Transverse colon (tissue), 4 donors: ENCODE measurements at regions of chr20 and their contacts with region 1.

Region 1: DNA sequence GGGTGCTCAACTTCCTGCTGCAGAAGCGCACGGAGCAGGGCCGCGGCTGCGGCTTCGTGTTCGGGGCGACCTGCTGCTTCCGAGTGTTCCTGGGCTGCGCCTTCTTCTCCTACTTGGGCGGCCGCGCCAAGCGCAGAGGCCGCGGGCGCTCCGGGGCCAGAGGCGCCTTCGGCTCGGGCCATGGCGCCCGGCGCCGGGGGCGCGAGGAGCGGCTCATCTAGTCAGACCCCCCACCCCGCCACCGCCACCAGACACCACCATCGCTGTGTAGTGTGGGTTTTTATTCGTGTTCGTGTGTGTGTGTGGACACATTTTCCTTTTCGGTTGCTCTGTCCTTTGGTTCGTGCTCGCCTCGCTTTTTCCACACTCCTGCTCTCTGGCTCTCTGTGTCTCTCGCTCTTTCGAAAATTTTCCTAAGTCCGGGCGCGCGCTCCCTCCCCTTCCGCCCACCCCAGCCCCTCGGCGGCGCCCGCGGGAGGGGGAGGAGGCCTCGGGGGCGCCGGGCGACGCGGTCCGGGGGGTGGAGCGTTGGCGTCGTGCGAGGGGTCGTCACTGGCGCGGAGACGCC is 38.1 kb downstream of the GNAS start:
- DNase-seq: peak; percentile 75
- H3K4me3 ChIP-seq: peak overlapping the region; percentile 55 to 100 (median 90)
- H3K27ac ChIP-seq: peak overlapping the region; percentile 99 to 100 (median 100)
- H3K4me1 ChIP-seq: peaks cover 15 to 38% (median 25%) of the 10 kb centered on the region in 4 donors
- H3K27me3 ChIP-seq: no peaks in the 10 kb centered on the region
- CTCF ChIP-seq: no peak
- EP300 ChIP-seq: no peak
- POLR2A ChIP-seq: peak; percentile 50

Region 2: DNA sequence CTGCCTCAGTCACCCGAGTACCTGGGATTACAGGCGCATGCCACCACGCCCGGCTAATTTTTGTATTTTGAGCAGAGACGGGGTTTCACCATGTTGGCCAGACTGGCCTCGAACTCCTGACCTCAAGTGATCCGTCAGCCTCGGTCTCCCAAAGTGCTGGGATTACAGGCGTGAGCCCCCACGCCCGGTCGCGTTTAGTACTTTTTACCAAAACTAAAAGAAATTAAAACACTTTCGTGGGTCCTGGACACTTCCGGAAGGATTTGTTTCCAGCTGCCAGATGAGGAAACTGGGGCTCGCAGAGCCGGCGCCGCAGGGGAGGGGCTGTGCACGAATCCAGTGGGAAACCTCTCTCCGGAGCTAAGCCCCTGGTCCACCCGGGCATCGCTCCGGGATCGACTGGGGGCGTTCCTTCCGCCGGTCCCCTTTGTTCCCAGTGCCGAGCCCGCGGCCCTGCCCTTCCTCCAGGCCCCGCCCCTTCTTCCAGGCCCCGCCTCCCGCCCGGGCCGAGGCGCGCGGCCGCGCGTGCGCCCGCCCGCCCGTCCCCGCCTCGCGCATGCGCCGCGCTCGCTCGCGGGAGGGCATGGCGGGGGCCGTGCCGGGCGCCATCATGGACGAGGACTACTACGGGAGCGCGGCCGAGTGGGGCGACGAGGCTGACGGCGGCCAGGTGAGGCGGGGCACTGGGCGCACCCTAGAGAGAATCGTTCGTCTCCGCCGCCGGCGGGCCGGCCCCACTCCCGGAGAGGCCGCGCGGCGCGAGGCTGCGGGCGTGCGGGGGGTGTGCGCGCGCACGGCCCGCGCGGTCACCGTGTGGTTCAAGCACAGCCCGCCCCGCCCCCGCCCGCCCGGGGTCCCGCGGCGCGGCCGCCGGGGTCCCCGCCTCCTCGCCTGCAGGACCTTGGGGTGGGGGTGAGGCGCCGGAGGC is 90.4 kb after region 1 on chr20 and contains the start of gene NELFCD:
- in situ Hi-C with region 1: no loop called
- intact Hi-C with region 1: loop called (anchors 10 kb)
- DNase-seq: peak; percentile 93
- H3K4me3 ChIP-seq: peak within 1 kb of the TSS; percentile 83 to 96 (median 88)
- H3K27ac ChIP-seq: peak within 1 kb of the TSS; percentile 87 to 94 (median 89)
- H3K4me1 ChIP-seq: peaks cover 7 to 31% (median 20%) of the 10 kb centered on the region in 4 donors
- H3K27me3 ChIP-seq: no peaks in the 10 kb centered on the region
- CTCF ChIP-seq: no peak
- EP300 ChIP-seq: no peak
- POLR2A ChIP-seq: peak; percentile 52
- total RNA-seq, gene NELFCD: 43.7 to 68.1 (median 55.1) TPM

Region 3: GRCh38 chr20:59032023-59032712 is 141.6 kb after region 1 on chr20 and contains the start of gene ATP5F1E:
- in situ Hi-C with region 1: no loop called
- intact Hi-C with region 1: loop called (anchors 5 kb)
- DNase-seq: peak; percentile 97
- H3K4me3 ChIP-seq: peak within 1 kb of the TSS; percentile 68 to 90 (median 69)
- H3K27ac ChIP-seq: peak within 1 kb of the TSS; percentile 90 to 98 (median 96)
- H3K4me1 ChIP-seq: peaks cover 26 to 57% (median 44%) of the 10 kb centered on the region in 4 donors
- H3K27me3 ChIP-seq: no peaks in the 10 kb centered on the region
- CTCF ChIP-seq: no peak
- EP300 ChIP-seq: no peak
- POLR2A ChIP-seq: peak; percentile 92
- total RNA-seq, gene ATP5F1E: 7.2 to 33.0 (median 25.8) TPM